Activated naive CD8-positive, alpha-beta T cell treated with anti-CD3 and anti-CD28 coated beads, Interleukin-2, amount 10 ng/mL, durations not matched to agents 7 days and 5 days (primary cell): ENCODE measurements at regions of chr6 and their contacts with region 1.

Region 1: GRCh38 chr6:42021847-42022754 is 28.2 kb upstream of the TAF8 start:
- DNase-seq: peak; percentile 68
- ATAC-seq: peak; percentile 86
- H3K4me3 Mint-ChIP-seq: peak overlapping the region; percentile 80
- H3K27ac Mint-ChIP-seq: peak overlapping the region; percentile 98
- H3K4me1 Mint-ChIP-seq: peaks cover 61% of the 10 kb centered on the region
- H3K27me3 Mint-ChIP-seq: no peaks in the 10 kb centered on the region

Region 2: DNA sequence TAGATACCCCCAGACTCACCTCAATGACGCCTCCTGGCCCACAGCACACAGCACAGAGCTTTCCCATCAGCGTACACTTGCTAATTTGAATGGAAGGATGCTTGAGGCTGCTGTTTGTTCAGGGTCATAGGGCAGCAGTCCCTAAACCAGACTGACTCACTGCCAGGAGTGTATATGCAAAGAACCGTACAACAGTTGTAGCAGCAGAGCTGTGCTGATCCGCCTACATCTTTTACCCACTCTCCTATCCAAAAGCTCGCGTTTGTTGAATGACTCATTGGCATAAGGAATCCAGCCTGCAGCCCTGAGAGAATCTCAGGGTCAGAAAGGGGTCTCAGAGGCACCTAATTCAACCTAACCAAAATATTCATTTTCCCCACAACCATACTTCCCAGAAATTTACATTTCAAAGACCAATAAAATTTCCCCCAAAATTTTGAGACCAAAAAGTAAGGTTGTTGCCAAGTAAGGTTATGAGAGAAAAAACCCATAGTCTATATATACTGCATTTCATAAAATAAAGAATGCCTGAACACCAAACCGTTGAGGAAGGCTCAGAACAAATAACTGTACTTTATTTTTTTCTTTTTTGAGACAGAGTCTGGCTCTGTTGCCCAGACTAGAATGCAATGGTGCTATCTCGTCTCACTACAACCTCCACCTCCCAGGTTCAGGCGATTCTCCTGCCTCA is 45.2 kb before region 1 on chr6:
- POLR2A ChIA-PET with region 1: no interaction called
- DNase-seq: no peak
- ATAC-seq: peak; percentile 50
- H3K4me3 Mint-ChIP-seq: peak overlapping the region; percentile 22
- H3K27ac Mint-ChIP-seq: peak overlapping the region; percentile 46
- H3K4me1 Mint-ChIP-seq: peaks cover 40% of the 10 kb centered on the region
- H3K27me3 Mint-ChIP-seq: no peaks in the 10 kb centered on the region

Region 3: DNA sequence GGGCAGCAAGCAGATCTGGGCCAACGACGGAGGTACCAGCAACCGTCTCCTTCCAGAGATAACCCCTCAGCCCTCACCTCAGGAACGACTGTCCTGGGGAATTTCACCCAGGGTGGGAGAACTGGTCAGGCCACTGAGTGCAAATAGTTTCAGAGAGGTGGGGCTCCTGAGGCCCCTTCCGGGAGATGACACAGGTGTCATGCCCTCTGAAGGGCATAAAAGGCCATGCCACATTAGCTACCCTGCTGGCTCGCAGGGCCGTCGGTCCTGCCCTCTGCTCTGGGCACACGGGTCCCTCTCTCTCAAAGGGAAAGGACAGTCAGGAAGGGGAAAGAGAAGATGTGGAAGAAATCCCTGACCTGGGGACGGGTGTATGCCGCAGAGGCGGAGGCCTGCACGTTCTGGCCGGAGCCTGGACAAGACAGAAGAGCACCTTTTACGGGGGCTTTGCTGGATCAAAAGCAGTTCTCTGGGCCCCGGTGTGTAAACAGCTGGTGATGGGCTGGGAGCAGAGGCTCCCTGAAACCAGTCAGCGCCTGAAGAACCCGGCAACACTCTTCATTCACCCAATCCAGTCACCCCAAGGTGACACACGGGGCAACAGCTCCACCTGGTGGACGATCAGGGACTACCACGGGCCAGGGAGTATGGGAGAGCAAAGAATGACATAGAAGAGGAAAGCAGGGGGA is 21.8 kb after region 1 on chr6:
- POLR2A ChIA-PET with region 1: interaction called, 26 read pairs
- DNase-seq: peak; percentile 95
- ATAC-seq: peak; percentile 38
- H3K4me3 Mint-ChIP-seq: peak overlapping the region; percentile 86
- H3K27ac Mint-ChIP-seq: peak overlapping the region; percentile 94
- H3K4me1 Mint-ChIP-seq: peaks cover 79% of the 10 kb centered on the region
- H3K27me3 Mint-ChIP-seq: no peaks in the 10 kb centered on the region

Region 4: GRCh38 chr6:42086046-42087035 is 64.2 kb after region 1 on chr6:
- POLR2A ChIA-PET with region 1: no interaction called
- DNase-seq: no peak
- ATAC-seq: no peak
- H3K4me3 Mint-ChIP-seq: no peak overlapping the region
- H3K27ac Mint-ChIP-seq: no peak overlapping the region
- H3K4me1 Mint-ChIP-seq: no peaks in the 10 kb centered on the region
- H3K27me3 Mint-ChIP-seq: no peaks in the 10 kb centered on the region